Posterior cingulate gyrus (tissue), 11 donors: ENCODE measurements at regions of chr15 and their contacts with region 1.

Region 1: DNA sequence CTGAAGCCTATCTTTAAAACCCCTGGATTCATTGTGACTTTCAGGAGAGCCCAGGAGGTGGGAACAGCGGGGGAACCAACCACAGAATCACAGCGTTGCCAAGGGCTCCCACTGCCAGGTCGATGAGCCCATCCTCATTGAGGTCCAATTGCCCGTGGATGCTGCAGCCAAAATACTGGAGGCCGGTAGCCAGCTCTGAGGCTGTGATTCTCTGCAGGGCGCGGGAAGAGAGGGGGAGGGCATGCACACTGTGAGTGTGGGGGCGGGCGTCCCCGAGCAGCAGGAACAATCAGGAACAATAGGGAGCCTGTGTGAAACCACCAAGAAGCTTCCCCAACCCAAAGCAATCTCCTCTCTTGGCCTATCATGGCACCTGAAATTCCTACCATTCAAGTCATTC is 53.4 kb downstream of the FEM1B start:
- DNase-seq: peak in 8 of 10 donors; percentile 18 to 90 (median 52)

Region 2: GRCh38 chr15:68229386-68230156 is 101.3 kb before region 1 on chr15 and contains the start of gene CLN6:
- intact Hi-C with region 1: no loop called
- DNase-seq: peak; percentile 66 to 97 (median 82)

Region 3: GRCh38 chr15:68518046-68518445 is 187.1 kb after region 1 on chr15:
- intact Hi-C with region 1: loop called (anchors 1 kb)
- DNase-seq: peak in 8 of 10 donors; percentile 29 to 90 (median 51)